ENCODE measurements at regions of chr7 and their contacts with region 1.

Region 1: GRCh38 chr7:30469303-30469702 is 9.3 kb downstream of the NOD1 start:
- DNase-seq: peak; percentile 88
- H3K4me3 ChIP-seq: no peak overlapping the region
- H3K27ac ChIP-seq: peak overlapping the region; percentile 74 to 81 (median 80)
- H3K4me1 ChIP-seq: peaks cover 0 to 79% (median 72%) of the 10 kb centered on the region in 4 donors
- H3K27me3 ChIP-seq: no peaks in the 10 kb centered on the region
- CTCF ChIP-seq: peak in 2 of 4 experiments; percentile 11 to 38
- EP300 ChIP-seq: peak in 2 of 4 donors; percentile 76 to 83
- POLR2A ChIP-seq: no peak

Region 2: GRCh38 chr7:30284298-30285066 is 184.8 kb before region 1 on chr7 and contains the start of gene ZNRF2:
- intact Hi-C with region 1: loop called (anchors 5 kb)
- DNase-seq: peak; percentile 100
- H3K4me3 ChIP-seq: peak within 1 kb of the TSS; percentile 63 to 97 (median 70)
- H3K27ac ChIP-seq: peak within 1 kb of the TSS; percentile 93 to 100 (median 97)
- H3K4me1 ChIP-seq: peaks cover 0 to 29% (median 25%) of the 10 kb centered on the region in 4 donors
- H3K27me3 ChIP-seq: no peaks in the 10 kb centered on the region
- CTCF ChIP-seq: peak; percentile 23 to 49 (median 36)
- EP300 ChIP-seq: peak in 1 of 4 donors; percentile 2
- POLR2A ChIP-seq: peak; percentile 30 to 43
- total RNA-seq, gene ZNRF2: 17.2 to 33.8 (median 23.2) TPM

Region 3: GRCh38 chr7:30433082-30433481 is 36.2 kb before region 1 on chr7:
- intact Hi-C with region 1: loop called (anchors 5 kb)
- DNase-seq: peak; percentile 82
- H3K4me3 ChIP-seq: no peak overlapping the region
- H3K27ac ChIP-seq: peak overlapping the region; percentile 54 to 78 (median 75)
- H3K4me1 ChIP-seq: peaks cover 0 to 57% (median 37%) of the 10 kb centered on the region in 4 donors
- H3K27me3 ChIP-seq: no peaks in the 10 kb centered on the region
- CTCF ChIP-seq: no peak
- EP300 ChIP-seq: peak in 2 of 4 donors; percentile 19 to 40
- POLR2A ChIP-seq: no peak

Region 4: DNA sequence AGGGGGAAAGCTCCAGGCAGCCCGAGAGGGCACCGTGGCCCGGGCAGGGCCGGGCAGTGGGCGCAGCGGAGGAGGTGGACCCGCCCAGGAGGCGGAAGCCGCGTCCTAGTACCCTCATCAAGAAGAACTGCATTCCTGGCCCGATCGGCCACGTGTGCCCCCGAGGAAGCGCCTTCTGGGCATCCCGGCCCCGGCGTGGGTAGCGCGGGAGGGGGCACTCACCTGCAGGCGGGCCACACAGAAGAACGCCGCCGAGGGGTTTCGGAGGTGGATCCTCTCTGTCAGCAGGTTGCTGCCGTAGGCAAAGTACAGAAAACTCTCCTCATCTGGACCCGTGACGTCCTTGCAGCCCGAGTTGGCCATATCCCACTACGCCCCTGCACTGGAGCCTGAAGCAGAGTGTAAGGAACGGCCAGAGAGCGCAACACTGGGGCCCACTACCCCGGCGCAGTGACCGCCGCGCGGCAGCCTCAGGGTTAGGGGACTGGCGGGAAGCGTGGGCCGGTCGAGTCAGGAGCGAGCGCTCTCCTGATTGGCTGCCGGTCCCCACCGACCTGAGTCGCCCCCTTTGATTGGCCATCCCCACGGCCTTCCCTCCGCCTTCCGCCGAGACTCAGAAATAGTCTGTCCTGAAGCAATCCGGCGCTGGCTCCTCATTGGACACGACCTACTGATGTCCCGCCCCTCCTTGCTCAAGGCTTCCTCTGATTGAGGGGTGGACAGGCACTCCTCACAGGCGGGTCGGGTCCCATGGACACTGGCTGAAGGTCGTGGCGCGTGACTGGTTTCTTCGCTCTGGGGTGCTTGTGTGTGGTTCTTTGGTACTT is 35.3 kb after region 1 on chr7 and contains the start of gene GGCT:
- intact Hi-C with region 1: loop called (anchors 5 kb)
- DNase-seq: peak; percentile 100
- H3K4me3 ChIP-seq: peak within 1 kb of the TSS; percentile 70 to 76 (median 74)
- H3K27ac ChIP-seq: peak within 1 kb of the TSS; percentile 80 to 88 (median 86)
- H3K4me1 ChIP-seq: peaks cover 0 to 24% (median 11%) of the 10 kb centered on the region in 4 donors
- H3K27me3 ChIP-seq: no peaks in the 10 kb centered on the region
- CTCF ChIP-seq: no peak
- EP300 ChIP-seq: no peak
- POLR2A ChIP-seq: peak; percentile 25 to 55
- total RNA-seq, gene GGCT: 18.8 to 40.9 (median 24.1) TPM

Region 5: GRCh38 chr7:30888747-30889146 is 419.4 kb after region 1 on chr7:
- intact Hi-C with region 1: no loop called
- DNase-seq: peak; percentile 79
- H3K4me3 ChIP-seq: no peak overlapping the region
- H3K27ac ChIP-seq: peak overlapping the region; percentile 63 to 75 (median 72)
- H3K4me1 ChIP-seq: peaks cover 0 to 41% (median 35%) of the 10 kb centered on the region in 4 donors
- H3K27me3 ChIP-seq: no peaks in the 10 kb centered on the region
- CTCF ChIP-seq: no peak
- EP300 ChIP-seq: no peak
- POLR2A ChIP-seq: no peak

Measured in sigmoid colon (tissue), 7 donors.